ENCODE measurements at regions of chr5 and their contacts with region 1.

Region 1: GRCh38 chr5:159833088-159833487 is 83.2 kb upstream of the ADRA1B start:
- DNase-seq: no peak
- ATAC-seq: no peak
- H3K4me3 Mint-ChIP-seq: no peak overlapping the region
- H3K27ac Mint-ChIP-seq: no peak overlapping the region
- H3K4me1 Mint-ChIP-seq: peaks cover 3% of the 10 kb centered on the region
- H3K27me3 Mint-ChIP-seq: no peaks in the 10 kb centered on the region
- CTCF ChIP-seq: no peak

Region 2: GRCh38 chr5:159819591-159820411 is 13.3 kb before region 1 on chr5:
- CTCF ChIA-PET with region 1: no interaction called
- POLR2A ChIA-PET with region 1: interaction called, 11 read pairs
- intact Hi-C with region 1: no loop called
- DNase-seq: no peak
- ATAC-seq: no peak
- H3K4me3 Mint-ChIP-seq: no peak overlapping the region
- H3K27ac Mint-ChIP-seq: no peak overlapping the region
- H3K4me1 Mint-ChIP-seq: no peaks in the 10 kb centered on the region
- H3K27me3 Mint-ChIP-seq: peaks cover 2% of the 10 kb centered on the region
- CTCF ChIP-seq: no peak

Region 3: DNA sequence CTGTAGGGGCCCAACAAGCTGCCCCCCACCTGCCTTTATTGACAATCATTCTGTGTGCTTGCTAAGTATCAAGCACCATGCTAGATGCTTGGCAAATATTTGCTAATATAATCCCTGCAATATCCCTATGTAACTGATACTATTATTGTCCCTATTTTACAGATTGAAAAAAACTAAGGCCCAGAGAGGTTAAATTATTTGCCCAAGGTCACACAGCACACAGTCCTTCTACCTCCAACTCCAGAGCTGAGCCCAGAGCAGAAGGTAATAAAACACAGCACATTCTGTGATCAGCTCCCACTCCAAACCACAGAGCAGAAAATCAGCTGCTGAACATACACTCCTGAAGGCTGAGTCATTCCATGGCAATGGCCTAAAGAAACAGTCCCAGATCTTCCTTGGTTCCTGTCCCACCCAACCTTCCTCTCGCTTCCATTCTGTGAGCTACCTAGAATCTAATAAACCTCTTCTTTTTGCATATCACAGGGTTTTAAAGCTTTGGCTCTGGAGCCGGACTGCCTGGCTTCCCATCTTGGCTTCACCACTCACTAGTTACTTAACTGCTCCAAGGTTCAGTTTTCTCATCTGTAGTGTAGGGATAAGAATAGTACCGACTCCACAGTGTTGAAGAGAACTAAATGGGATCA is 16.5 kb after region 1 on chr5:
- CTCF ChIA-PET with region 1: no interaction called
- POLR2A ChIA-PET with region 1: no interaction called
- intact Hi-C with region 1: no loop called
- DNase-seq: no peak
- ATAC-seq: no peak
- H3K4me3 Mint-ChIP-seq: no peak overlapping the region
- H3K27ac Mint-ChIP-seq: no peak overlapping the region
- H3K4me1 Mint-ChIP-seq: no peaks in the 10 kb centered on the region
- H3K27me3 Mint-ChIP-seq: peaks cover 11% of the 10 kb centered on the region
- CTCF ChIP-seq: no peak

Region 4: DNA sequence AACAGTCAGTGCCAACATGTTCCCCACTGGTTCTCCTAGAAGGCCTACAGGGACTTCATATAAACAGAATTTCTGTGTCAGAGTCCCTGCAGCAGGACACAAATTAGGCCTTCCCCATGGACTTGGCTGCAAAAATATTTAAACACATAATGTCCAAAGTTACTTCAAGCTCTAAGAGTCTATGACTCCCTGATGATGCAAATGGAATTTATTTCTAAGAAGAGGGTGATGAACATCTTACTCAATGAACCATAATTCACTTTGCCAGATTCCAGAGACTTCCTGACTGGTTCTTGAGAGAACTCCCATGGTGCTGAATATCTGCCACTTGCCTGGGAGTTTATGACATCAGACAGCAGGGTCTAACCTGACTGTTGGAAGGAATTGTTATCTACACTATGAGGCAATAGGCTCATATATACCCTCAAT is 50.4 kb after region 1 on chr5:
- CTCF ChIA-PET with region 1: no interaction called
- POLR2A ChIA-PET with region 1: no interaction called
- intact Hi-C with region 1: no loop called
- DNase-seq: no peak
- ATAC-seq: no peak
- H3K4me3 Mint-ChIP-seq: no peak overlapping the region
- H3K27ac Mint-ChIP-seq: no peak overlapping the region
- H3K4me1 Mint-ChIP-seq: no peaks in the 10 kb centered on the region
- H3K27me3 Mint-ChIP-seq: peaks cover 27% of the 10 kb centered on the region
- CTCF ChIP-seq: no peak

Region 5: DNA sequence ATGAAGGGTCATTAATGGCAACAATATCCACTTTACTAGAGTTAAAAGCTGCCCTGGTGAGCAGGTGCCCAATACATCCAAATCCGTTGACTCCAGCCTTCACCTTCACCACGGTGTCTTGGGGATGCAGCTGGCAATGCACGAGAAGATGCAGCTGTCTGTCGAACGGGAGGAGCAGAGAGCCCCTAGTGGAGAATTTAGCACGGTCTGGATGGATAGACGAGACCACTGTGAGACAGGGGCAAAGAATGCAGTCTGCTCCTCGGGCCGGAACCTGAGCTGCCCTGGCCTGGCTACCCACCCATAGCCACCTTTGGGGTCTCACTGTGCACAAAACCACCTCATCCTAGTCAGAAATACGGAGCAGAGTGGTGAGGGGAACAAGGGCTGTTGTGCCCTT is 118.3 kb after region 1 on chr5:
- CTCF ChIA-PET with region 1: no interaction called
- POLR2A ChIA-PET with region 1: no interaction called
- intact Hi-C with region 1: no loop called
- DNase-seq: no peak
- ATAC-seq: no peak
- H3K4me3 Mint-ChIP-seq: no peak overlapping the region
- H3K27ac Mint-ChIP-seq: no peak overlapping the region
- H3K4me1 Mint-ChIP-seq: no peaks in the 10 kb centered on the region
- H3K27me3 Mint-ChIP-seq: peaks cover 21% of the 10 kb centered on the region
- CTCF ChIP-seq: no peak

Measured in activated B cell treated with CpG ODN at 0.5 μM for 24 hours (primary cell).